ENCODE measurements at regions of chr19 and their contacts with region 1.

Region 1: GRCh38 chr19:51131780-51132680 is 7.3 kb downstream of the SIGLEC9 start:
- DNase-seq: peak in 5 of 10 donors; percentile 21 to 53 (median 51)
- ATAC-seq: peak; percentile 74 to 78
- H3K4me3 Mint-ChIP-seq: peak overlapping the region; percentile 69 to 88 (median 80)
- H3K27ac Mint-ChIP-seq: peak overlapping the region; percentile 84 to 96 (median 94)
- H3K4me1 Mint-ChIP-seq: peaks cover 36 to 79% (median 67%) of the 10 kb centered on the region in 4 donors
- H3K27me3 Mint-ChIP-seq: no peaks in the 10 kb centered on the region

Region 2: GRCh38 chr19:51114087-51114729 is 17.8 kb before region 1 on chr19:
- POLR2A ChIA-PET with region 1: interaction called, 14 read pairs
- DNase-seq: peak in 2 of 10 donors; percentile 54 to 57
- ATAC-seq: peak; percentile 54 to 77
- H3K4me3 Mint-ChIP-seq: peak overlapping the region in 9 of 10 donors; percentile 7 to 68 (median 30)
- H3K27ac Mint-ChIP-seq: peak overlapping the region in 9 of 10 donors; percentile 21 to 87 (median 68)
- H3K4me1 Mint-ChIP-seq: peaks cover 15 to 48% (median 31%) of the 10 kb centered on the region in 4 donors
- H3K27me3 Mint-ChIP-seq: no peaks in the 10 kb centered on the region

Measured in naive thymus-derived CD8-positive, alpha-beta T cell (primary cell).